Dorsolateral prefrontal cortex (tissue), 120 donors: ENCODE measurements at regions of chr18 and their contacts with region 1.

Region 1: GRCh38 chr18:62584241-62585120 is 61.7 kb downstream of the ZCCHC2 start:
- DNase-seq: peak; percentile 80 to 93 (median 86)
- H3K4me3 ChIP-seq: peak overlapping the region in 23 of 59 donors; percentile 7 to 48 (median 27)
- H3K27ac ChIP-seq: peak overlapping the region in 56 of 59 donors; percentile 7 to 84 (median 68)
- H3K27me3 ChIP-seq: no peaks in the 10 kb centered on the region
- CTCF ChIP-seq: peak; percentile 86 to 100 (median 98)

Region 2: GRCh38 chr18:62413206-62413605 is 171.3 kb before region 1 on chr18:
- intact Hi-C with region 1: no loop called
- DNase-seq: no peak
- H3K4me3 ChIP-seq: no peak overlapping the region
- H3K27ac ChIP-seq: no peak overlapping the region
- H3K27me3 ChIP-seq: peaks cover 0 to 6% (median 0%) of the 10 kb centered on the region in 45 donors
- CTCF ChIP-seq: no peak

Region 3: DNA sequence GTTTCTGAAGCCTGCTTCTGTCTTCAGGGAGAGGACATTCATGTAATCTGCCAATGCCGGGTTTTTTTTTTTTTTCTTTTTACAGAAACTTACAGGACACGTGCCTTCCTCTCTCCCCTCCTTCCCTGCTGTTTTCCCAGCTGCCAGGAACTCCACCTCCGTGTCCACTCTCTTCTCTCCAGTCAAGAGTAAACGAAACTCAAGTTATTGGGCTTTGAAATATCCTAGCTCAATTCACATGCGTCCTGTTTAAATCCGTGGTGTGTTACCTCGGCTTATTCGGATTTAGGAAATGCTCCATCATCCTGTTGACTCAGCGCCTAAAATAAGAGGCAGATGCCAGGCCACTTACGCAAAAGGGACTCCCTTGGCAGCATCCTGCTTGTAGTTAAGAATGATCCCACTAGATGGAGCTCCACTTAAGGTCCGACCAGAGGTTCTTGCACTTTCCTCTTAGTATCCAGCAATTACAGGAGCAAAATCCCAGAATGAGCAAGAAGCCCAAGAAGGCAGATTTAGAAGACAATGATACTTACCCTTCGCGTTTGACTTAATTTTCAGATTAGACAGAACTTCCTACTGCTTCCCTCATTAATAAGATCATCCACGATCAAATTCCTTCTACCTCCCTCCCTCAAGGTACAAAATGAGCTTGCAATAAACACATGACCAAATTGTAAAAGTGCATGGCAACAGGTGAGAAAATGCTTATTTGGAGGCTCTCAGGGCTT is 158.9 kb before region 1 on chr18:
- intact Hi-C with region 1: loop called (anchors 2 to 5 kb)
- DNase-seq: peak in 8 of 10 donors; percentile 57 to 87 (median 66)
- H3K4me3 ChIP-seq: peak overlapping the region in 57 of 59 donors; percentile 12 to 61 (median 43)
- H3K27ac ChIP-seq: peak overlapping the region in 42 of 59 donors; percentile 1 to 80 (median 57)
- H3K27me3 ChIP-seq: no peaks in the 10 kb centered on the region
- CTCF ChIP-seq: peak; percentile 77 to 95 (median 88)

Region 4: GRCh38 chr18:62690236-62690815 is 105.8 kb after region 1 on chr18:
- intact Hi-C with region 1: loop called (anchors 5 kb)
- DNase-seq: peak in 9 of 10 donors; percentile 61 to 91 (median 79)
- H3K4me3 ChIP-seq: peak overlapping the region in 49 of 59 donors; percentile 2 to 60 (median 31)
- H3K27ac ChIP-seq: peak overlapping the region; percentile 72 to 100 (median 96)
- H3K27me3 ChIP-seq: no peaks in the 10 kb centered on the region
- CTCF ChIP-seq: peak in 3 of 56 donors; percentile 11 to 22 (median 15)

Region 5: GRCh38 chr18:62898359-62898758 is 313.9 kb after region 1 on chr18:
- intact Hi-C with region 1: loop called in 1 of 2 experiments (anchors 10 kb)
- DNase-seq: no peak
- H3K4me3 ChIP-seq: no peak overlapping the region
- H3K27ac ChIP-seq: peak overlapping the region in 35 of 59 donors; percentile 3 to 97 (median 38)
- H3K27me3 ChIP-seq: no peaks in the 10 kb centered on the region
- CTCF ChIP-seq: no peak